ENCODE measurements at regions of chr17 and their contacts with region 1.

Region 1: GRCh38 chr17:63611354-63611753 is 10.7 kb downstream of the TACO1 start:
- DNase-seq: no peak
- H3K4me3 ChIP-seq: no peak overlapping the region
- H3K27ac ChIP-seq: no peak overlapping the region
- H3K4me1 ChIP-seq: no peaks in the 10 kb centered on the region
- H3K27me3 ChIP-seq: no peaks in the 10 kb centered on the region
- CTCF ChIP-seq: no peak

Region 2: DNA sequence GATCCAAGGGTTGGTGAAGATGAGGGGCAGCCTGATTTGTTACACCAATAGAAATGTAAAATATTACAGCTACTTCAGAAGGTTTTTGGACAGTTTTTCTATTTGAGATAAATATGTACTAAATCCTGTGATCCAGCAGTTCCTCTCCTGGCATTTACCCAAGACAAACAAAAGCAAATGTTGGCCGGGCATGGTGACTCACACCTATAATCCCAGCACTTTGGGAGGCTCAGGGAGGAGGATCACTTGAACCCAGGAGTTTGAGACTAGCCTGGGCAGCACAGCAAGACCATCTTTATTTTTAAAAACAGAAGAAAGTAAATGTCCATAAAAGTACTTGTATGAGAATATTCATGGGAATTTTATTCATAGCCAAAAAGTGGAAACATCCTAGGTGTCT is 1048.7 kb before region 1 on chr17:
- CTCF ChIA-PET with region 1: no interaction called
- POLR2A ChIA-PET with region 1: no interaction called
- intact Hi-C with region 1: loop called (anchors 10 kb)
- DNase-seq: peak in 1 of 2 experiments; percentile 42
- H3K4me3 ChIP-seq: no peak overlapping the region
- H3K27ac ChIP-seq: no peak overlapping the region
- H3K4me1 ChIP-seq: peaks cover 46% of the 10 kb centered on the region
- H3K27me3 ChIP-seq: no peaks in the 10 kb centered on the region
- CTCF ChIP-seq: no peak

Region 3: GRCh38 chr17:62671583-62672312 is 939.6 kb before region 1 on chr17:
- CTCF ChIA-PET with region 1: no interaction called
- POLR2A ChIA-PET with region 1: no interaction called
- intact Hi-C with region 1: loop called (anchors 10 kb)
- DNase-seq: peak in 1 of 2 experiments; percentile 50
- H3K4me3 ChIP-seq: no peak overlapping the region
- H3K27ac ChIP-seq: no peak overlapping the region
- H3K4me1 ChIP-seq: no peaks in the 10 kb centered on the region
- H3K27me3 ChIP-seq: no peaks in the 10 kb centered on the region
- CTCF ChIP-seq: no peak

Region 4: DNA sequence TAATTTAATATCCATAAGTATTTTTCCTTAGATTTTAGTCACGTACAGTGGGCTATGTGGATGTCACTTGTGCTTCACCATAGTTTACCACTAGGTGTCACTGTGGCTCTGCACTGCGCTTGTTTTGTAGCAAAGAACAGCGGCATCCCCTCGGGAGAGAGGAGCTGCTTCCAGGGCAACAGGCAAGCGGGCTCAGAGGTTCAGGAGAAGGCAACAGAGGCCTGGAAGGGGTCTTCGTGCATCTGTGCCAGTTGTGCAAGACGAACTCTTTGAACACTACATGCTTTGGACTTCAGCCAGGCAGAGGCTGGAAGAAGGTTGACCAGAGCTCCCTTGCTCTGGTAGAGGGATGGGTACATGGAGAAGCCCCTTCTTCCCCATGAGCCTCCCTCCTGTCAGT is 185.9 kb before region 1 on chr17:
- CTCF ChIA-PET with region 1: interaction called, 6 read pairs
- POLR2A ChIA-PET with region 1: no interaction called
- intact Hi-C with region 1: loop called (anchors 1 kb)
- DNase-seq: peak in 1 of 2 experiments; percentile 66
- H3K4me3 ChIP-seq: no peak overlapping the region
- H3K27ac ChIP-seq: no peak overlapping the region
- H3K4me1 ChIP-seq: no peaks in the 10 kb centered on the region
- H3K27me3 ChIP-seq: no peaks in the 10 kb centered on the region
- CTCF ChIP-seq: peak; percentile 96

Region 5: DNA sequence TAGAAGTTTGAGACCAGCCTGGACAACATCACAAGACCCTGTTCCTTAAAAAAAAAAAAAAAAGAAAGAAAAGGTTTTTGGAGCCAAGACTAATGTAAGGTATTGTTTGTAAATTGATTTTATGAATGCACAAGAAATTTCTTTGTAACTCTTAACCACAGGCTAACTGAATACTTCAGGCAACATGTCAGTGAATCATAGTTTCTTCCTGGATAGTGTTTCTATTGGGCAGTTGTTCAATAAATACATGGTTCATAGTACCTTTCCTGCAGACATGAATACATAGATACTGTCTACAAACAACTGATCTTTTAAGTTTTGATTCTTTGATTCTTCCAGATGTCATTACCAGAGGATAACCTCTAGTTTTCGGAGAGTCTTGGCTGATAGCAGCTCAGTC is 174.2 kb after region 1 on chr17:
- CTCF ChIA-PET with region 1: no interaction called
- POLR2A ChIA-PET with region 1: no interaction called
- intact Hi-C with region 1: no loop called
- DNase-seq: peak in 1 of 2 experiments; percentile 66
- H3K4me3 ChIP-seq: no peak overlapping the region
- H3K27ac ChIP-seq: peak overlapping the region; percentile 83
- H3K4me1 ChIP-seq: peaks cover 53% of the 10 kb centered on the region
- H3K27me3 ChIP-seq: no peaks in the 10 kb centered on the region
- CTCF ChIP-seq: no peak